ENCODE measurements at regions of chr2 and their contacts with region 1.

Region 1: GRCh38 chr2:65278531-65278981 is 50.9 kb downstream of the ACTR2 start:
- DNase-seq: no peak
- H3K4me3 ChIP-seq: no peak overlapping the region
- H3K27ac ChIP-seq: no peak overlapping the region
- H3K4me1 ChIP-seq: peaks cover 16% of the 10 kb centered on the region
- H3K27me3 ChIP-seq: peaks cover 4 to 11% of the 10 kb centered on the region in 2 experiments
- CTCF ChIP-seq: no peak
- POLR2A ChIP-seq: no peak

Region 2: GRCh38 chr2:65554765-65555591 is 276.4 kb after region 1 on chr2:
- CTCF ChIA-PET with region 1: interaction called, 6 read pairs
- POLR2A ChIA-PET with region 1: no interaction called
- dilution Hi-C with region 1: no loop called
- intact Hi-C with region 1: loop called (anchors 2 kb)
- DNase-seq: no peak
- H3K4me3 ChIP-seq: no peak overlapping the region
- H3K27ac ChIP-seq: no peak overlapping the region
- H3K4me1 ChIP-seq: no peaks in the 10 kb centered on the region
- H3K27me3 ChIP-seq: peaks cover 16 to 19% of the 10 kb centered on the region in 2 experiments
- CTCF ChIP-seq: no peak
- POLR2A ChIP-seq: no peak